RWPE1 (cell line): ENCODE measurements at regions of chr15 and their contacts with region 1.

Region 1: GRCh38 chr15:78241007-78241406 is 6.6 kb upstream of the ACSBG1 start:
- DNase-seq: peak; percentile 89
- H3K27ac ChIP-seq: no peak overlapping the region
- CTCF ChIP-seq: peak; percentile 95

Region 2: DNA sequence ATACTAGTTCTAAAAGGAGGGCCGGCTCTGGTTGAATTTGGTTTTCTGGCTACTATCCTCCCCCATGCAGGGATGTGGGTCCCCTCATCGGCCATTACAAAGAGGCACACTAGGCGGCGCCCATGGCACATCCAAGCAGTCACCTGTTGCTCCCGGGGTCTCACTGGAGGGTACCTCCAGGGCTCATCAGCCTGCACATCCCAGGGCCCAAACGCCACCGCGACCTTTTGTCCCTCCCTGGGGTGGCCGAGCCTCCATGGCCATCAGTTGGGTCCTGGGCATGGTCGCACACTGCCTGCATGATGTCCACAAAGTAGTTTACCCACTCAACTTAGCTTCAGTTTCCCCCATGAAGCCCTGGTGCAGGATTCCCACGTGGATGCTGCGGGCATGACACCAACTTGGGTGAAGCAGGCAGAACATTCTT is 63.5 kb before region 1 on chr15:
- CTCF ChIA-PET with region 1: interaction called, 24 read pairs
- POLR2A ChIA-PET with region 1: no interaction called
- DNase-seq: peak; percentile 39
- H3K27ac ChIP-seq: no peak overlapping the region
- CTCF ChIP-seq: peak; percentile 82

Region 3: GRCh38 chr15:78392430-78392829 is 151.4 kb after region 1 on chr15:
- CTCF ChIA-PET with region 1: no interaction called
- POLR2A ChIA-PET with region 1: no interaction called
- DNase-seq: no peak
- H3K27ac ChIP-seq: no peak overlapping the region
- CTCF ChIP-seq: no peak